Activated naive CD4-positive, alpha-beta T cell treated with anti-CD3 and anti-CD28 coated beads, Interleukin-2, amount 10 ng/mL, durations not matched to agents 7 days and 5 days (primary cell): ENCODE measurements at regions of chr9 and their contacts with region 1.

Region 1: DNA sequence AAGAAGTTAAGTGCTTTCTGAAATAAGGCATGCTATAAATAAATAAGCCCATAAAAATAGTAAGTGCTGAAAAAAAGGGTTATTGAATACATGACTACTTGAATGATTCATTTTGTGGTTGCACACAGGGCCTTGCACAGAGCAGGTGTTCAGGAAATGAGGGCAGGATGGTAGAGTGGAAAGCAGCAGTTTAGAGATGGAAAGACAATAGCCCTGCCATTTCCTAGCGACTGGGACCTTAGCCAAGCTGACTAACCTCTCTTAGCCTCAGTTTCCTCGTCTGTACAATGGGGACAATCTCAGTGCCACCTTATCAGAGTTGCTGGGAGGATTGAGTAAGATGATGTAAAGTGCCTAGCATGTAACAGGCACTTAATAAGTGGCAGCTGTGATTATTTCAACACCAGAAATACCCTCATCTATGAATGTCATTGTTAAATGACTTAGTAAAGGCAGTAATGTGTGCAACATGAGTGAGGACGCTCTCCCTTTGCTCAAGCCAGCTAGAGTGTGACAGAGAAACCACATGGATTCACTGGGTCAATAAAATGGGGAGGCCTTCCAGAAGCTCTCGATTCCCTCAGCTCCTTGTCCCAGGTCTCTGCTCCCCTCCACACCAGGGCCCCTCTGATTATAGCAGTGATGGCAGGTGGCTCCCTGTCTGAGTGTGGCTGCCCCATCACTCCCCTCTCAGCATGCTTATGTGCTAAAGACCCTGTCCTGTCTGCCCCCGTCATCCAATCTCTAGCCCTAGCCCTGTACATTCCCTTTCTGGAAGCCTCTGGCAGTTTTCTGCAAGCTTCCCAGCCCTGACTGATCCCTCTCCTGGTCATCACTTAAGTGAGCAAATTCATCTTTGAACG is 16.0 kb upstream of the PHF19 start:
- DNase-seq: peak; percentile 74
- H3K4me3 Mint-ChIP-seq: peak overlapping the region; percentile 72
- H3K27ac Mint-ChIP-seq: peak overlapping the region; percentile 99
- H3K4me1 Mint-ChIP-seq: peaks cover 93% of the 10 kb centered on the region
- H3K27me3 Mint-ChIP-seq: no peaks in the 10 kb centered on the region

Region 2: DNA sequence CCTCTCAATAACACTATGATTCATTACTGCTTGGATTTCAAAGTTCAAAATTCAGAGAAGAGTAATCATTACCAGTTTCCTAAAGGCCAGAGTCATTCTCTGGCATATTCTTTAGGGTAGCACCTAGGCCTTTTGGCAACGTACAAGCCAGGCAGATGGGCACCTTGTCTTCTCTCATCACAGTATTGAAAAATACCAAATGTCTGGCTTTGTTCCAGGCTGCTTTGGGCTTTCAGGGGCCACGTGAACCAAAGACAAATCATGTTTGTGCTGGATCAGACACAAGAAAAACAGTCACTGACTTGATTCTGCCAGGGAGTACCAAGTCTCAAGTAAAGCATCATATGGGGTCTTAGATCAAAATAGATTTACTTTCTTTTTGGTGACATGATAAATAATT is 194.2 kb before region 1 on chr9:
- CTCF ChIA-PET with region 1: no interaction called
- DNase-seq: no peak
- H3K4me3 Mint-ChIP-seq: no peak overlapping the region
- H3K27ac Mint-ChIP-seq: no peak overlapping the region
- H3K4me1 Mint-ChIP-seq: peaks cover 11% of the 10 kb centered on the region
- H3K27me3 Mint-ChIP-seq: no peaks in the 10 kb centered on the region

Region 3: DNA sequence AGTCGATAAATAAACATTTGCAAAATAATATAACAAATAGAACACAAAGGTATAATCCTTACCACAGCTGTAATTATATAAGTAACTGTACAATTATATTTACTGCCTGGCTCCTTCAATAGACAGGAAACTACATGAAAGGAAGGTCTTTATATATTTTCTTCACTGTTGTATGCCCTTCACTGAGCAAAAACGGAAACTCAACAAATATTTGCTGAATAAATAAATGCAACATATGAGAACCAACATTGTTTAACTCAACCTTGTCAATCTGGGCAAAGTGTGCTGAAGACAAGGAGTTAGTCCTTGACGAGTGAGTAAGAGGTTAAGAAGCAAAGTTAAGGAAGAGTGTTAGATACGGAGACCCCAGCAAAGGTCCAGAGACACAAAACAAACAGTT is 72.9 kb before region 1 on chr9:
- CTCF ChIA-PET with region 1: no interaction called
- DNase-seq: no peak
- H3K4me3 Mint-ChIP-seq: no peak overlapping the region
- H3K27ac Mint-ChIP-seq: no peak overlapping the region
- H3K4me1 Mint-ChIP-seq: no peaks in the 10 kb centered on the region
- H3K27me3 Mint-ChIP-seq: no peaks in the 10 kb centered on the region

Region 4: DNA sequence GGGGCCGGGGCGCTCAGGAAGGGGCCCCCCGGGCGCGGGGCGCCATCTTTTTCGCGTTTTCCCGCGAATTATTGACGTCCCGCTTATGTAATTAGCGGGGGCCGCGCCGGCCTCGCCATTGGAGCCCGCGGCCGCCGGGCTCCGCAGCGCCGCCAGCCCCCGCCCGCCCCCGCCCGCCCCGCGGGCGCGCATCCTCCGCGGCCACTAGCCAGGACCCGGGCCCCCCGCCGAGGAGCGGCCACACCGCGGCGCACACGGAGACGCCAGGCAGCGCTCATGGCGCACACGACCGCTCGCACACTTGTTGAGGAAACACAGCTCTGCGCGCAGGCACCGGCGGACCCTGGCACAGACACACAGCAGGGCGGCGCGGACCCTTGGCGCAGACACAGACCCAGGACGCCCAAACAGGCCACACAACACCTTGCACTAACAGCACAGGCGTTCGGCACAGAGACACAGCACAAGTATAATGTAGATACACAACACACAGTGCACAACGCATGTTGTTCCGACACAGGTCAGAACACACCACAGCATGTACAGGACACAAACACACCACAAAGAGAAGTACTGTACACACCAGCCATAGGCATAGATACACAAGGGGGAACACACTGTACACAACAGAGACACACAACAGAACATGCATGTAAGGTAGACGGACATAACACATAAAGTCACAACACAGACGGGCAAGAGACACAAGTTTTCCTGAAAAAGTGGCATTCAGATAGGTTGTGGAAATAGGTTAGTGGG is 15.5 kb before region 1 on chr9:
- CTCF ChIA-PET with region 1: interaction called, 31 read pairs
- DNase-seq: peak; percentile 77
- H3K4me3 Mint-ChIP-seq: peak overlapping the region; percentile 82
- H3K27ac Mint-ChIP-seq: peak overlapping the region; percentile 95
- H3K4me1 Mint-ChIP-seq: peaks cover 82% of the 10 kb centered on the region
- H3K27me3 Mint-ChIP-seq: no peaks in the 10 kb centered on the region

Region 5: GRCh38 chr9:120925535-120926396 is 32.8 kb after region 1 on chr9:
- CTCF ChIA-PET with region 1: interaction called, 17 read pairs
- DNase-seq: peak; percentile 66
- H3K4me3 Mint-ChIP-seq: peak overlapping the region; percentile 84
- H3K27ac Mint-ChIP-seq: peak overlapping the region; percentile 94
- H3K4me1 Mint-ChIP-seq: peaks cover 86% of the 10 kb centered on the region
- H3K27me3 Mint-ChIP-seq: no peaks in the 10 kb centered on the region